Body of pancreas (tissue), 4 donors: ENCODE measurements at regions of chr1 and their contacts with region 1.

Region 1: DNA sequence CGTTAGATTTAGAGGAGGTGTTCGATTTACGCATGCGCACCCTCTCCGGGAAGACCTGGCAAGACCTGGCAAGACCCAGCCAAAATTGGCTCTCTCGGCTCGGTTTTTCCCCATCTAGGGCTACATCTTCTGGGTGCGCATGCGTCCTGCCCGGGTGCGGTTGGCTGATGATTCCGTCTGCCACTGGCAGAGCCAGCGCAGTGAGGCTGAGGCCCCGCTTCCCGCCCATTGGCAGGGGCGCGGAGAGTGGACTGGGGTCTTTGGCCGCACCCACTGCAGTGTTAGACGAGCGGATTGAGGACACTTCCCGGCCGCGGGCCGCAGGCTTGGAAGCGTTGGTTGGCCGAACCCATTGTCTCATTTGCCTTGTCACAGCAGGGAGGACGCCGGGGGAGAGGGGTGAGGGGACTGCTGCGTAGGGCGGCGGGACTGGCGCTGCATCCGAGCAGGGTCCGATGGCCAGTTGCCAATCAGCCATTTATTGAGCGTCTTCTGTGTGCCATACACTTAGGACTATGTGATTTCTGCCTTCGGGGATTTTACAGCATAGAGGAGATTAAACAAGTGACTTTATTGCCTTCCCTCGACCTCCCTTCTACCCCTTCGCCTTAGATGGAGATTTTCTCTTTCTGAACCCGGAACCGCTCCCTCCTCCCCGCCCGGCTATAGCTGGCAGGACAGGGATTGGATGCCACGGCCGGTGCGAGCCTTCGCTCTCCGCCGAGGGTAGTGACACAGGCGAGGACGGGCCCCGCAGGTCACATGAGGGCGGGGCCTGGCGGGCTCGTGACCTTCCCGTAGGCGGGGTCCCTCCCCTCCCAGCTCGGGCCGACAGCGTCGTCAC is 43.7 kb downstream of the MEF2D start:
- DNase-seq: peak; percentile 99 to 100 (median 100)
- ATAC-seq: peak; percentile 87
- H3K4me3 ChIP-seq: peak overlapping the region in 1 of 2 donors; percentile 2
- H3K27ac ChIP-seq: peak overlapping the region; percentile 99 to 100 (median 100)
- H3K4me1 ChIP-seq: peaks cover 27% of the 10 kb centered on the region
- H3K27me3 ChIP-seq: no peaks in the 10 kb centered on the region
- CTCF ChIP-seq: no peak
- POLR2A ChIP-seq: peak; percentile 87 to 96 (median 94)

Region 2: GRCh38 chr1:156510709-156511108 is 53.9 kb after region 1 on chr1:
- intact Hi-C with region 1: no loop called
- DNase-seq: peak; percentile 24 to 81 (median 62)
- ATAC-seq: peak; percentile 51
- H3K4me3 ChIP-seq: no peak overlapping the region
- H3K27ac ChIP-seq: peak overlapping the region in 1 of 4 donors; percentile 8
- H3K4me1 ChIP-seq: peaks cover 12% of the 10 kb centered on the region
- H3K27me3 ChIP-seq: no peaks in the 10 kb centered on the region
- CTCF ChIP-seq: no peak
- POLR2A ChIP-seq: no peak

Region 3: DNA sequence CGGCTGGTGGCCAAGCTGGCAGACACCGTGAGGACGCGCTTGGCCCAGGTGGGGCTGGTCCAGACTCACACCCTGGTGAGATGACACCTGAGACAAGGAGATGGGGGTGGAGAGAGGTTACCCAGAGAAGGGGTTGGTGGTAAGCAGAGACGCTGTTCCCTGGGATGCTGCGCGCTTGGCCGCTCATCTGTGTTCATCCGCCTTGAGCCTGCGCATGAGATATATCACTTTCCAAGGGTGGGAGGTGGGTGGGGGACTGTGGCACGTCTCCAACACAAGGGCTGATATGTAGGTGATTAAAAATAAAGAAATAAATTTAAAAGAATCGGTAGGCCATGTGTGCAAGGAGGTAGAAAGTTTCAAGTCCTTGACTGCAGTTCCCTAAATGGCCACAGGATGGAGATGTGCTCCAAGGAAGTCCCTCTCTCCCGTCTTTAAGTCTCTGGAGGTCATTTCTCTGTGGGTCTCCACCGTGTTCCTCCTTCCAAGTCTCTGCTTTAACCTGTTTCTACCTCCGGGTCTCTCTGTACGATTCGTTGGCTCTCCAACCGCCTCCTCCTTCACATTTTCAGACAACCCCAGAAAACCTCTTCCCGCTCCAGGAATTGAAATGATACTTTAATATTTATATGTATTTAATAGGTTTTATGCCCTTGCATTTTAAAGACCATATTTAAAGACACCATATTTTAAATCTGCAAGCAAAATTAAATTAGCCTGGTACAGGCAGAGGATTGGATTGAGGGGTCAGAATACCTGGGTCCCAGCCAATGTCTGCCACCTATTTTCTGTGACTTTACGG is 127.2 kb after region 1 on chr1:
- intact Hi-C with region 1: loop called (anchors 10 kb)
- DNase-seq: peak; percentile 79 to 86 (median 82)
- ATAC-seq: peak; percentile 75
- H3K4me3 ChIP-seq: no peak overlapping the region
- H3K27ac ChIP-seq: no peak overlapping the region
- H3K4me1 ChIP-seq: no peaks in the 10 kb centered on the region
- H3K27me3 ChIP-seq: no peaks in the 10 kb centered on the region
- CTCF ChIP-seq: peak; percentile 86 to 93 (median 88)
- POLR2A ChIP-seq: no peak

Region 4: DNA sequence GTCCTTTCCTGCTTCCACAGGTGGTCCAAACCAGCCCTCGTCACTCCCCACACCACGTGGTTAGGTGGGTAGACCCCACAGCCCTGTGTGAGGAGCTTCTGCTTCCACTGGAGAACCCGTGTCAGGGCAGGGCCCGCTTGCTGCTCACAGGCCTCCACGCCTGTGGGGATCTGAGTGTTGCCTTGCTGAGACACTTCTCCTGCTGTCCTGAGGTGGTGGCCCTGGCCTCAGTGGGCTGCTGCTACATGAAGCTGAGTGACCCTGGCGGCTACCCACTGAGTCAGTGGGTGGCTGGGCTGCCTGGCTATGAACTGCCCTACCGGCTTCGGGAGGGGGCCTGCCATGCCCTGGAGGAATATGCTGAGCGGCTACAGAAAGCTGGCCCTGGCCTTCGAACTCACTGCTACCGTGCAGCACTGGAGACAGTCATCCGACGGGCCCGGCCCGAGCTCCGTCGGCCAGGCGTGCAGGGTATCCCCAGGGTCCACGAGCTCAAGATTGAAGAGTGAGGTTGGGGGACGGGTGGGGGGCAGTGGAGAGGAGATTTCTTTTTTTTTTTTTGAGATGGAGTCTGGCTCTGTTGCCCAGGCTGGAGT is 277.2 kb after region 1 on chr1:
- intact Hi-C with region 1: no loop called
- DNase-seq: no peak
- ATAC-seq: no peak
- H3K4me3 ChIP-seq: no peak overlapping the region
- H3K27ac ChIP-seq: no peak overlapping the region
- H3K4me1 ChIP-seq: peaks cover 12% of the 10 kb centered on the region
- H3K27me3 ChIP-seq: no peaks in the 10 kb centered on the region
- CTCF ChIP-seq: no peak
- POLR2A ChIP-seq: no peak